Calu3 (cell line): ENCODE measurements at regions of chr1 and their contacts with region 1.

Region 1: GRCh38 chr1:206059355-206059915 is 6.5 kb downstream of the RHEX start:
- DNase-seq: no peak
- H3K4me3 Mint-ChIP-seq: peak overlapping the region; percentile 94
- H3K27ac Mint-ChIP-seq: peak overlapping the region; percentile 94
- H3K4me1 Mint-ChIP-seq: peaks cover 78% of the 10 kb centered on the region
- H3K27me3 Mint-ChIP-seq: no peaks in the 10 kb centered on the region
- CTCF ChIP-seq: no peak

Region 2: GRCh38 chr1:205860566-205860965 is 198.9 kb before region 1 on chr1:
- CTCF ChIA-PET with region 1: no interaction called
- intact Hi-C with region 1: no loop called
- DNase-seq: no peak
- H3K4me3 Mint-ChIP-seq: no peak overlapping the region
- H3K27ac Mint-ChIP-seq: no peak overlapping the region
- H3K4me1 Mint-ChIP-seq: peaks cover 12% of the 10 kb centered on the region
- H3K27me3 Mint-ChIP-seq: peaks cover 29% of the 10 kb centered on the region
- CTCF ChIP-seq: no peak

Region 3: DNA sequence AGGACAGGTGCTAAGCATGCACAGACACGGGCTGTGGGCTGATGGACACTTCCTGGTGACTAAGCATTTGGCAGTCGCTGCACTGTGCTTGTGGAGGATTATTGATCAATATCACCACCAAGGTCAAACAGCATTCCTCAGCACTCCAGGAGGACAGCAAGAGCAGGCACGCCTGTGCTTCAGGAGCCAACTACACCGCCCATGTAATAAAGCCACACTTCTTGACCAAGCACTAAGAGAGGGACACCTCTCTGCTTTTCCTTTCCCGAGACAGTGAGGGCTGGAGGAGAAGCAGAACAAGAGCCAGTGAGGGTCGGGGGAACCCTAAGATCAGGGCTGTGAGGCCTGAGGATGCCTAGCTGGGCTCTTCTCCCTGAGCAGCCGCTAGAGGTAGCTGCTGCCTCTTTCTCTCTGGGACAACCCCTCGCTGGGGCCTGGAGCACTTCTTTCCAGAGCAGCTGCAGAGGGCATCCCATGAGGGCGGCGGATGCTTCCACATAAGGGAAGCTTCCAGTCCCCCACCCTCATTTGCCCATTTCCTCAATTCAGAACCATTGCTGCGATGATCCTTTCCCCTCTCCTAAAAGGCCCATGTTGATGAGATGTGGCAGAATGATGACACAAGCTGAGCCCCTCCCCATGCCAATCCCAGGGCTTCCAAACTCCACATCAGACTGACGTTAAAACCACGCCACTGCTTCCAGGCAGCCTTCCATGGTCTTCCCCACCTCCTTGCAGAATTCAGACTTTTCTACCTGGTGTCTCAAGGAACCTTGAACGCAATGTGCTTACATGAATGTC is 75.3 kb before region 1 on chr1:
- CTCF ChIA-PET with region 1: interaction called, 5 read pairs
- intact Hi-C with region 1: loop called (anchors 2 kb)
- DNase-seq: peak; percentile 85
- H3K4me3 Mint-ChIP-seq: peak overlapping the region; percentile 34
- H3K27ac Mint-ChIP-seq: peak overlapping the region; percentile 55
- H3K4me1 Mint-ChIP-seq: peaks cover 35% of the 10 kb centered on the region
- H3K27me3 Mint-ChIP-seq: no peaks in the 10 kb centered on the region
- CTCF ChIP-seq: peak; percentile 73

Region 4: GRCh38 chr1:206021626-206022365 is 37.6 kb before region 1 on chr1:
- CTCF ChIA-PET with region 1: interaction called, 8 read pairs
- intact Hi-C with region 1: loop called (anchors 5 kb)
- DNase-seq: peak; percentile 66
- H3K4me3 Mint-ChIP-seq: peak overlapping the region; percentile 68
- H3K27ac Mint-ChIP-seq: peak overlapping the region; percentile 91
- H3K4me1 Mint-ChIP-seq: peaks cover 67% of the 10 kb centered on the region
- H3K27me3 Mint-ChIP-seq: no peaks in the 10 kb centered on the region
- CTCF ChIP-seq: no peak

Region 5: GRCh38 chr1:206030714-206031113 is 28.7 kb before region 1 on chr1:
- CTCF ChIA-PET with region 1: interaction called, 19 read pairs
- intact Hi-C with region 1: loop called (anchors 2 kb)
- DNase-seq: peak; percentile 90
- H3K4me3 Mint-ChIP-seq: no peak overlapping the region
- H3K27ac Mint-ChIP-seq: peak overlapping the region; percentile 20
- H3K4me1 Mint-ChIP-seq: peaks cover 64% of the 10 kb centered on the region
- H3K27me3 Mint-ChIP-seq: no peaks in the 10 kb centered on the region
- CTCF ChIP-seq: peak; percentile 88